ENCODE measurements at regions of chr6 and their contacts with region 1.

Region 1: GRCh38 chr6:159042003-159042825 is 2.6 kb downstream of the TAGAP start:
- DNase-seq: no peak
- ATAC-seq: peak; percentile 73
- H3K4me3 ChIP-seq: no peak overlapping the region
- H3K27ac ChIP-seq: no peak overlapping the region
- H3K4me1 ChIP-seq: no peaks in the 10 kb centered on the region
- H3K27me3 ChIP-seq: no peaks in the 10 kb centered on the region

Region 2: DNA sequence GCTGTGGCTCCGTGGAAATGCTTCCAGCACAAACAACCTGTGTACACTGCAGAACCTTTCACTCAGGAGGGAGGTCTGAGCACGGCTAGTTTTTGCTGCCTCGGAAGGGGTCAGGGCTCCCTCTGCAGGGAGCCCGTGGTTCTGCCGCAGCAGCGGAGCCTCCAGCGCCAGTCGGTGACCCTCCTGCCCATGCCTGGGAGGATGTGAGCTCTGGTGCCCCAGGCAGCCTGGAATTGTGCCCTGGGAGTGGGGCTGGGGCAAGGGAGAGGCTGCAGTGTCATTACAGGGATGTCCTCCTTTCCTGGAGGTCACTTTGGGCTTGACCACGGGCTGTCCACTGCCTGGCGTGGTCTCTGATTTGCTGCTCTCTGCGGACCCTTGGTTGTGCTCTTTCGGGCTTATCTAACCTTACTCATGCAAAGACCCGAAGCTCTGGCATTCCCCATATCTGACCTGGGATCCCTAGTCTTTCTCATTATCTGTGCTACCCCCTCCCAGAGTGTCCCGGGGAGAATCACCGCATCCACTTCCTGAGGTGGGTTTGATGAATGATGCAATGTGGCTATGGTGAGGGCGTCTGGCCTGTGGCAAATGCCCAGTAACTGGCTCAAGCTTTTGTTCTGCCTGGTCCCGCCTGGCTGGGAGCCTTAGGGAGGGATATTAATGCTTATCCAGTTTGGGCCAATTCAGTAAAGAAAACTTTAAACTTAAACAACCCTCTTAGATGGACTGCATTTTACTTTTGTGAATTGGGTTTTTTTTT is 62.1 kb after region 1 on chr6:
- intact Hi-C with region 1: loop called in 1 of 2 experiments (anchors 5 kb)
- DNase-seq: peak; percentile 72 to 81
- ATAC-seq: peak; percentile 75
- H3K4me3 ChIP-seq: no peak overlapping the region
- H3K27ac ChIP-seq: no peak overlapping the region
- H3K4me1 ChIP-seq: no peaks in the 10 kb centered on the region
- H3K27me3 ChIP-seq: no peaks in the 10 kb centered on the region

Region 3: DNA sequence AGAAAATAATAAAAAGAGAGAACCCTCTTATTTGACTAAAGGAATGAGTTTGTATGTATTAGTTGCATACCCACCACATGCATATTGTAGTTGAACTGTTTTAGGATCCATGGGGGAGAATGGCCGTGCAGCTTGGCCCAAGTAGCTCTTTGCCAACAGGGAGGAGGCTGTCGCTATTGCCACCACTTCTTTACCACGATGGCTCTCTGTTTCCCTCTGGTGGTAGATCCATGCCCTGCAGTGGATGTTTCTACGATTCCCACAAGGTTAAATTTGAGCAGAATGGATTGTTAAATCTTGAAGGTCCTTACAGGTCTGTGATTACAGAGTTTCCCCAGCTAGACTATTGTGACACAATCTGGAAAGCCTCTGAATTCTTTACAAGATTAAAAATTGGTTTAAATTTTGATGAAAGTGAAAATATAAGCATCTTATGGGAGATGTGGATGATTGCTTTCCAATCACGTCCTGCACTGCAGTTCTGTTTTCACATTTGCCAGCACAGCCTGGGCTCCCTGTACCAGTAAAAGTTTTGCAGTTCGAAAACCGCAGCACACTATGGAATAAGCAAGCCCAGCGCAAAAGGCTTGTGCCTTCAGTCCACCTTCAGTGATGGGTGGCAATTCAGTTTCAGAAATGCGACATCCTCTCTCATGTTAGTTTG is 92.6 kb after region 1 on chr6:
- intact Hi-C with region 1: loop called in 1 of 2 experiments (anchors 10 kb)
- DNase-seq: peak in 1 of 2 donors; percentile 69
- ATAC-seq: no peak
- H3K4me3 ChIP-seq: no peak overlapping the region
- H3K27ac ChIP-seq: no peak overlapping the region
- H3K4me1 ChIP-seq: no peaks in the 10 kb centered on the region
- H3K27me3 ChIP-seq: no peaks in the 10 kb centered on the region

Region 4: GRCh38 chr6:159203304-159204005 is 161.2 kb after region 1 on chr6:
- intact Hi-C with region 1: no loop called
- DNase-seq: peak in 1 of 2 donors; percentile 71
- ATAC-seq: peak; percentile 66
- H3K4me3 ChIP-seq: no peak overlapping the region
- H3K27ac ChIP-seq: peak overlapping the region; percentile 83 to 90
- H3K4me1 ChIP-seq: peaks cover 0 to 4% of the 10 kb centered on the region in 2 donors
- H3K27me3 ChIP-seq: no peaks in the 10 kb centered on the region

Measured in aorta (tissue), 5 donors.